ENCODE measurements at regions of chr1 and their contacts with region 1.

Region 1: DNA sequence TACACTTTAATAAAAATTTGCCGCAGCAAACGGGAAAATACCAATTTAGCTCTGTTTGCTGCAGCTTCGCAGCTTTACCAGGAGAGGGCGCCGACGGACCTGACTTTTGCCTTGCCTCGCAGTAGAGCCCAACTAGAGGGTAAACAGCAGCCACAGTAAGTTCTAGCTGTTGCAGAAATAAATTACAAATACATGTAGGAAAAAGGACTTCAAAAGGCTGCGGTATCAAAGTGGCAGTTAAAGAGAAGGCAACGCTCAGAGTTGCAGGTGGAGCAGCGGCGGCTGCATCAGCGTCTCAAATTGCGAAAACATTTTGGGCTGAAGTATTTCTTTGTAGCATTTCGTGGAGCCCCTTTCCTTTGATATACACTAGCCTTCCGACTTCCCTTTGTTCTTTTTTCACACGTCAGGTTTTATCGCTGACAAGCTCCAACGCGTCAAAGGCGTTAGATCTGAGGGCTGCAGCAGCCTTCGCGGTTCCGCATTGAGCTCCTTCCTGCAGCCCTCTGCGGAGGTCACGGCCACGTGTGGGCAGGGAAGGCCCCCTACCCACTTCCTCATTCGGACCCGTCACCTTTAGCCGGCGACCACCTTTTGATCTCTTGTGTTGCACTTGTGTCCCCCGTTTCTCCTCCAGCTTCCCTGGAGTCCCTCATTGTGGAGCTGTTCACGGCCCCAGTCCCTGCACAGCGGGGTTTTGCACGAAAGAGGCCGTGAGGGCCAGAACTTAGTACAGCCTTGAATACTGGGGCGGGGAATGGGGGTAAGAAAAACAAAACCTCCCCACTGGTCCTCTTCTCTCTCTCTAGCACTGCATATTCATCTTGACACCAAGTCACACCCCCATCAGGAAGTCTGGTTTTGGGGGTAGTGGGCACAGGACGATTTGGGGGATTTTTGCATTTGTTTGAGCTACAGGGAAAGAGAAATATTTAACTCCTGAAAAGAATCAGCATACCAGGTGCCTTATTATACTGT is 72.8 kb downstream of the S1PR1 start:
- DNase-seq: peak; percentile 72
- ATAC-seq: peak; percentile 66
- H3K4me3 Mint-ChIP-seq: peak overlapping the region; percentile 71
- H3K27ac Mint-ChIP-seq: peak overlapping the region; percentile 86
- H3K4me1 Mint-ChIP-seq: peaks cover 69% of the 10 kb centered on the region
- H3K27me3 Mint-ChIP-seq: no peaks in the 10 kb centered on the region
- CTCF ChIP-seq: peak; percentile 89

Region 2: GRCh38 chr1:101071470-101071891 is 238.1 kb before region 1 on chr1:
- CTCF ChIA-PET with region 1: no interaction called
- POLR2A ChIA-PET with region 1: no interaction called
- intact Hi-C with region 1: no loop called
- DNase-seq: no peak
- ATAC-seq: no peak
- H3K4me3 Mint-ChIP-seq: no peak overlapping the region
- H3K27ac Mint-ChIP-seq: no peak overlapping the region
- H3K4me1 Mint-ChIP-seq: peaks cover 48% of the 10 kb centered on the region
- H3K27me3 Mint-ChIP-seq: no peaks in the 10 kb centered on the region
- CTCF ChIP-seq: no peak

Region 3: GRCh38 chr1:101122452-101123166 is 187.0 kb before region 1 on chr1:
- CTCF ChIA-PET with region 1: no interaction called
- POLR2A ChIA-PET with region 1: no interaction called
- intact Hi-C with region 1: no loop called
- DNase-seq: peak; percentile 65
- ATAC-seq: peak; percentile 77
- H3K4me3 Mint-ChIP-seq: peak overlapping the region; percentile 42
- H3K27ac Mint-ChIP-seq: peak overlapping the region; percentile 84
- H3K4me1 Mint-ChIP-seq: peaks cover 51% of the 10 kb centered on the region
- H3K27me3 Mint-ChIP-seq: no peaks in the 10 kb centered on the region
- CTCF ChIP-seq: no peak

Region 4: DNA sequence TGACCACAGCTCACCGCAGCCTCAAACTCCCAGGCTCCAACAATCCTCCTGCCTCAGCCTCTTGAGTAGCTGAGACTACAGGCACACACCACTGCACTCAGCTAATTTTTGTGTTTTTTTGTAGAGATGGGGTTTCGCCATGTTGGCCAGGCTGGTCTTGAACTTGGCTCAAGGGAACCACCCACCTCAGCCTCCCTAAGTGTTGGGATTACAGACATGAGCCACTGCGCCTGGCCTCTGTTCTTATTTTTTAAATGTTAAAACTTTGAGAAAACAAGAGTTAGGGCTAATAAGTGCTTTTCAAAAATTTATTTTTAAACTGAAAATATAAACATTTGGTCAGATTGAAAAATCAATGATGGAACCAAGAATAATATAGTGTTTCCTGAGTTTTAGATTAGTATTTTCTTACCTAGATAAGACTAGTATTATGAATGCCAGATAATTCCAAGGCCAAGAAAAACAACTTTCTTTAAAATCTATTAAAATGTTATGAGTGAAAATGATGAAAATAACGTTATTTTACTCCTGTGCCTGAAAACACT is 139.0 kb before region 1 on chr1:
- CTCF ChIA-PET with region 1: no interaction called
- POLR2A ChIA-PET with region 1: no interaction called
- intact Hi-C with region 1: no loop called
- DNase-seq: no peak
- ATAC-seq: no peak
- H3K4me3 Mint-ChIP-seq: no peak overlapping the region
- H3K27ac Mint-ChIP-seq: no peak overlapping the region
- H3K4me1 Mint-ChIP-seq: peaks cover 52% of the 10 kb centered on the region
- H3K27me3 Mint-ChIP-seq: no peaks in the 10 kb centered on the region
- CTCF ChIP-seq: no peak

Region 5: GRCh38 chr1:101238681-101239094 is 70.9 kb before region 1 on chr1:
- CTCF ChIA-PET with region 1: interaction called, 18 read pairs
- POLR2A ChIA-PET with region 1: interaction called, 3 read pairs
- intact Hi-C with region 1: no loop called
- DNase-seq: peak; percentile 95
- ATAC-seq: peak; percentile 42
- H3K4me3 Mint-ChIP-seq: peak overlapping the region; percentile 86
- H3K27ac Mint-ChIP-seq: peak overlapping the region; percentile 98
- H3K4me1 Mint-ChIP-seq: peaks cover 42% of the 10 kb centered on the region
- H3K27me3 Mint-ChIP-seq: no peaks in the 10 kb centered on the region
- CTCF ChIP-seq: peak; percentile 98

Region 6: GRCh38 chr1:101325144-101325543 is 15.5 kb after region 1 on chr1:
- CTCF ChIA-PET with region 1: interaction called, 26 read pairs
- POLR2A ChIA-PET with region 1: no interaction called
- intact Hi-C with region 1: no loop called
- DNase-seq: no peak
- ATAC-seq: no peak
- H3K4me3 Mint-ChIP-seq: no peak overlapping the region
- H3K27ac Mint-ChIP-seq: no peak overlapping the region
- H3K4me1 Mint-ChIP-seq: no peaks in the 10 kb centered on the region
- H3K27me3 Mint-ChIP-seq: peaks cover 2% of the 10 kb centered on the region
- CTCF ChIP-seq: no peak

Region 7: GRCh38 chr1:101344745-101345144 is 35.1 kb after region 1 on chr1:
- CTCF ChIA-PET with region 1: interaction called, 27 read pairs
- POLR2A ChIA-PET with region 1: no interaction called
- intact Hi-C with region 1: no loop called
- DNase-seq: no peak
- ATAC-seq: no peak
- H3K4me3 Mint-ChIP-seq: no peak overlapping the region
- H3K27ac Mint-ChIP-seq: no peak overlapping the region
- H3K4me1 Mint-ChIP-seq: peaks cover 31% of the 10 kb centered on the region
- H3K27me3 Mint-ChIP-seq: no peaks in the 10 kb centered on the region
- CTCF ChIP-seq: no peak

Region 8: DNA sequence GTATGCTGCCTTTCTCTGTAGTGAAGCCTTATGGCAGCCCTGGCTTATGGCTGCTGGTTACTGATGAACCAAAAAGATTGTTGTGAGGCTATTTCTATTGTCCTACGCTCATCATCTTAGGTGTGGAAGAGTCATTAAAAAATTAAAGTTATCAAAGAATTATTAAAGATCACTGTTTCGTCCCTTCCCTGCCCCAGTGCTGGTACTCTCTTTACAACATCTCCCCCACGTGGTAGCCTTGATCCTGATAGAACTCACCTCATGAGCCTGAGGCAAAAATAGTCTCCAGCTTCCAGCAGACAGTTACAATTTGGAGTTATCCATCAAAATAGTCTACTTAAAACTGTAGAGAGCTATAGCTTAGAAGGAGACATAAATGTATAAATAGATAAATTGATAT is 128.7 kb after region 1 on chr1:
- CTCF ChIA-PET with region 1: interaction called, 20 read pairs
- POLR2A ChIA-PET with region 1: no interaction called
- intact Hi-C with region 1: no loop called
- DNase-seq: no peak
- ATAC-seq: no peak
- H3K4me3 Mint-ChIP-seq: no peak overlapping the region
- H3K27ac Mint-ChIP-seq: no peak overlapping the region
- H3K4me1 Mint-ChIP-seq: peaks cover 11% of the 10 kb centered on the region
- H3K27me3 Mint-ChIP-seq: peaks cover 5% of the 10 kb centered on the region
- CTCF ChIP-seq: peak; percentile 46

Region 9: GRCh38 chr1:101506541-101507164 is 197.0 kb after region 1 on chr1:
- CTCF ChIA-PET with region 1: interaction called, 10 read pairs
- POLR2A ChIA-PET with region 1: no interaction called
- intact Hi-C with region 1: no loop called
- DNase-seq: peak; percentile 56
- ATAC-seq: peak; percentile 73
- H3K4me3 Mint-ChIP-seq: no peak overlapping the region
- H3K27ac Mint-ChIP-seq: no peak overlapping the region
- H3K4me1 Mint-ChIP-seq: no peaks in the 10 kb centered on the region
- H3K27me3 Mint-ChIP-seq: no peaks in the 10 kb centered on the region
- CTCF ChIP-seq: peak; percentile 76